Cardiac septum (tissue), 1 donor: ENCODE measurements at regions of chr7 and their contacts with region 1.

Region 1: GRCh38 chr7:28573059-28573553 is 160.8 kb downstream of the CREB5 start:
- DNase-seq: no peak

Region 2: GRCh38 chr7:28272461-28272877 is 300.6 kb before region 1 on chr7:
- intact Hi-C with region 1: no loop called
- DNase-seq: no peak

Region 3: GRCh38 chr7:28533731-28534531 is 39.2 kb before region 1 on chr7:
- intact Hi-C with region 1: loop called (anchors 5 kb)
- DNase-seq: no peak

Region 4: GRCh38 chr7:28626624-28627262 is 53.6 kb after region 1 on chr7:
- intact Hi-C with region 1: no loop called
- DNase-seq: no peak

Region 5: GRCh38 chr7:28804990-28805389 is 231.9 kb after region 1 on chr7:
- intact Hi-C with region 1: no loop called
- DNase-seq: no peak

Region 6: GRCh38 chr7:29189743-29190201 is 616.7 kb after region 1 on chr7:
- intact Hi-C with region 1: no loop called
- DNase-seq: no peak